ENCODE measurements at regions of chr16 and their contacts with region 1.

Region 1: DNA sequence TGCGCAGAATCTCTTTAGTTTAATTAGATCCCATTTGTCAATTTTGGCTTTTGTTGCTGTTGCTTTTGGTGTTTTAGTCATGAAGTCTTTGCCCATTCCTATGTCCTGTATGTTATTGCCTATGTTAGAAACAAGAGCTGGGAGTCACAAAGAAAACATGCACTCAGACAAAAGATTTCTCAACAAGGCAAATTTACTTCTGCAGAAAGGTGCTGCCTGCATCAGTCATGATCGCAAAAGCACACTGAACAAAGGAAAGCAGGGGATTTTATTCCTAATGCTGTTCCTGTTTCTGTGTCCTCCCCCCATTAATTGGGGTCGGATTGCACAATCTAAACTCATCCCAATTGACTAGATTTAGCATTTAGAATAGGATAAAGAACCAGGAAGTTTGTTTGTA is 55.9 kb downstream of the ATF7IP2 start:
- DNase-seq: no peak
- ATAC-seq: no peak
- H3K4me3 ChIP-seq: no peak overlapping the region
- H3K27ac ChIP-seq: no peak overlapping the region
- H3K4me1 ChIP-seq: no peaks in the 10 kb centered on the region
- H3K27me3 ChIP-seq: no peaks in the 10 kb centered on the region
- CTCF ChIP-seq: no peak
- POLR2A ChIP-seq: no peak

Region 2: DNA sequence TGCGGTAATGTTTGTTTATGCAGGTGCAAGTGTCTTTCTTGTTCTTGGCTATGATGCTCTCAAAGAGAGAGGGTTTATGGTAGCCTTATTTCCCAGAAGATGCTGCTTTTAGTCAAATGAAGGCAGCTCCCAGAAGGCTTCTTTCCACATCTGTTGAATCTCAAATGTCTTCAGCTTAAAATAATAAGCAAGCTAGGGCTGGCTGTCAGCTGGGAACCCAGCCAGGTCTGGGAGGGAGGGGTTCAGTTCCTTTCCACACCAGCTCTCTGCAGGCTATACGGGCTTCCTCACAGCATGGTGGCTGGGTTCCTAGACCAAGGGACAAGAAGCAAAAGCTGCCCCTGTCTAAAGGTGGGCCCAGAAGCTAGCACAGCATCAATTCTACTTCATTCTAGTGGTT is 103.3 kb before region 1 on chr16:
- intact Hi-C with region 1: no loop called
- DNase-seq: peak in 2 of 5 donors; percentile 19 to 24
- ATAC-seq: peak in 1 of 4 donors; percentile 48
- H3K4me3 ChIP-seq: no peak overlapping the region
- H3K27ac ChIP-seq: no peak overlapping the region
- H3K4me1 ChIP-seq: peaks cover 0 to 14% (median 0%) of the 10 kb centered on the region in 12 donors
- H3K27me3 ChIP-seq: no peaks in the 10 kb centered on the region
- CTCF ChIP-seq: no peak
- POLR2A ChIP-seq: no peak

Region 3: GRCh38 chr16:10419712-10420111 is 22.0 kb before region 1 on chr16:
- intact Hi-C with region 1: loop called in 1 of 10 experiments (anchors 2 kb)
- DNase-seq: no peak
- ATAC-seq: no peak
- H3K4me3 ChIP-seq: no peak overlapping the region
- H3K27ac ChIP-seq: no peak overlapping the region
- H3K4me1 ChIP-seq: no peaks in the 10 kb centered on the region
- H3K27me3 ChIP-seq: no peaks in the 10 kb centered on the region
- CTCF ChIP-seq: no peak
- POLR2A ChIP-seq: no peak